BJ (cell line): ENCODE measurements at regions of chr13 and their contacts with region 1.

Region 1: GRCh38 chr13:52348983-52349780 is 56.8 kb downstream of the THSD1 start:
- DNase-seq: peak; percentile 55
- H3K4me3 ChIP-seq: no peak overlapping the region
- H3K27me3 ChIP-seq: no peaks in the 10 kb centered on the region
- CTCF ChIP-seq: no peak

Region 2: DNA sequence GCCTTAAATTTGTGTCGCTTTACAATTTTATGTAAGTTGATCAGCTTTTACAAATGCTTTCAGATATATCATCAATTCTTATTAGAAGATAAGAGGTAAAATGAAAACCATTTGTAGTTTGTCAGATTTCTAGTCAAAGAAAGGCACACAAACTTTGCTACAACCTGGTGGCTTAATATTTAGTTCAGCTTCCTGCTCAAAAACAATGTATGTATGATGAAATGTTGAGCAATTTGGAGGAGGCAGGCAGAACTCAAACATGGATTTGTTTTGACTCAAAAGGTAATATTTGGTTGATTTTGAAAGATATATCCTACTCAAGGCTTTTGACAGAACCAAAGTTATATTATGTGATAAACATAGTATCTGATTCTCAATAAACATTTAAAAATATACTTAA is 244.6 kb before region 1 on chr13:
- CTCF ChIA-PET with region 1: no interaction called
- POLR2A ChIA-PET with region 1: no interaction called
- DNase-seq: no peak
- H3K4me3 ChIP-seq: no peak overlapping the region
- H3K27me3 ChIP-seq: no peaks in the 10 kb centered on the region; the same call in 1 of the 2 replicates
- CTCF ChIP-seq: no peak

Region 3: GRCh38 chr13:52450012-52450792 is 101.0 kb after region 1 on chr13 and contains the start of gene VPS36:
- CTCF ChIA-PET with region 1: interaction called, 56 read pairs
- POLR2A ChIA-PET with region 1: no interaction called
- DNase-seq: peak; percentile 46
- H3K4me3 ChIP-seq: peak within 1 kb of the TSS; percentile 67
- H3K27me3 ChIP-seq: no peaks in the 10 kb centered on the region
- CTCF ChIP-seq: peak; percentile 80
- polyA plus RNA-seq, gene VPS36: 10.0 and 19.7 TPM in 2 replicates